SK-N-SH (cell line): ENCODE measurements at regions of chr11 and their contacts with region 1.

Region 1: GRCh38 chr11:94504689-94505293 is 7.5 kb upstream of the C11orf97 start:
- DNase-seq: peak; percentile 52
- H3K4me3 ChIP-seq: no peak overlapping the region
- H3K27ac ChIP-seq: no peak overlapping the region
- H3K4me1 ChIP-seq: no peaks in the 10 kb centered on the region
- H3K27me3 ChIP-seq: no peaks in the 10 kb centered on the region
- CTCF ChIP-seq: peak; percentile 85
- EP300 ChIP-seq: no peak
- RAD21 ChIP-seq: peak; percentile 78

Region 2: GRCh38 chr11:94493281-94494125 is 11.3 kb before region 1 on chr11 and contains the starts of genes ANKRD49 and MRE11:
- CTCF ChIA-PET with region 1: interaction called, 10 read pairs
- POLR2A ChIA-PET with region 1: no interaction called
- DNase-seq: peak; percentile 89
- H3K4me3 ChIP-seq: peak within 1 kb of the TSS; percentile 84 to 94
- H3K27ac ChIP-seq: peak within 1 kb of the TSS; percentile 61
- H3K4me1 ChIP-seq: peaks cover 9 to 12% of the 10 kb centered on the region in 2 experiments
- H3K27me3 ChIP-seq: no peaks in the 10 kb centered on the region
- CTCF ChIP-seq: no peak
- EP300 ChIP-seq: no peak
- RAD21 ChIP-seq: no peak
- polyA plus RNA-seq, gene ANKRD49: 4.9 and 7.6 TPM in 2 replicates
- polyA plus RNA-seq, gene MRE11: 2.8 and 4.7 TPM in 2 replicates

Region 3: GRCh38 chr11:94537031-94537600 is 32.3 kb after region 1 on chr11:
- CTCF ChIA-PET with region 1: no interaction called
- POLR2A ChIA-PET with region 1: no interaction called
- DNase-seq: no peak
- H3K4me3 ChIP-seq: no peak overlapping the region
- H3K27ac ChIP-seq: no peak overlapping the region
- H3K4me1 ChIP-seq: no peaks in the 10 kb centered on the region
- H3K27me3 ChIP-seq: no peaks in the 10 kb centered on the region
- CTCF ChIP-seq: no peak
- EP300 ChIP-seq: no peak
- RAD21 ChIP-seq: no peak